Activated CD4-positive, alpha-beta memory T cell treated with anti-CD3 and anti-CD28 coated beads for 36 hours (primary cell): ENCODE measurements at regions of chr19 and their contacts with region 1.

Region 1: DNA sequence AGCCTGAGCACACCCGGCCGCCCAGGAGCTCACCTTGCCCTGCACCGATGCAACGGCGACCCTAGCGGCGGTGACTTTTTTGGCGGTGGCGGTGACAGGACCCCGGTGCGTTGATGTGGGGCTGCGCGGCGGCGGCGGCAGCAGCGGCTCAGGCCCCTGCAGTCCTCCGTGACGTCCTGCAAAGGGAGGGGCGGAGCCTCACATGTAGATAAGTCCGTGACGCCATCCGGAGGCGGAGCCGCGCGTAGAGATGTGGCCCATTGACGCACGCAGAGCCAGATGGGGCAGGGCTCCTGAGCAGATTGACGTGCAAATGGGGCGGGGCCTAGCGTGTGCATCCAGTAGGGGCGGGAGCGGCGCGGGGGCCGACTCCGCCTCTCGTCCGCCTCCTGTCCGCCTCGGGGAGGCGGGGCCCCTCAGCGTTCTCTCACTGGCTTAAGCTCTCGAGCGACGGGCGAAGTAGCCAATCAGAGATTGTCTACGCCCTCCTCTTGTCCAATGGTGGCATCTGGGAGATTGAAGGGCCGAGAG is at the start of gene RAB3A:
- DNase-seq: peak; percentile 100
- H3K4me3 Mint-ChIP-seq: peak within 1 kb of the TSS; percentile 93
- H3K27ac Mint-ChIP-seq: peak within 1 kb of the TSS; percentile 69
- H3K4me1 Mint-ChIP-seq: peaks cover 21% of the 10 kb centered on the region
- H3K27me3 Mint-ChIP-seq: peaks cover 3% of the 10 kb centered on the region
- total RNA-seq, gene RAB3A: 3.9 to 4.3 TPM

Region 2: DNA sequence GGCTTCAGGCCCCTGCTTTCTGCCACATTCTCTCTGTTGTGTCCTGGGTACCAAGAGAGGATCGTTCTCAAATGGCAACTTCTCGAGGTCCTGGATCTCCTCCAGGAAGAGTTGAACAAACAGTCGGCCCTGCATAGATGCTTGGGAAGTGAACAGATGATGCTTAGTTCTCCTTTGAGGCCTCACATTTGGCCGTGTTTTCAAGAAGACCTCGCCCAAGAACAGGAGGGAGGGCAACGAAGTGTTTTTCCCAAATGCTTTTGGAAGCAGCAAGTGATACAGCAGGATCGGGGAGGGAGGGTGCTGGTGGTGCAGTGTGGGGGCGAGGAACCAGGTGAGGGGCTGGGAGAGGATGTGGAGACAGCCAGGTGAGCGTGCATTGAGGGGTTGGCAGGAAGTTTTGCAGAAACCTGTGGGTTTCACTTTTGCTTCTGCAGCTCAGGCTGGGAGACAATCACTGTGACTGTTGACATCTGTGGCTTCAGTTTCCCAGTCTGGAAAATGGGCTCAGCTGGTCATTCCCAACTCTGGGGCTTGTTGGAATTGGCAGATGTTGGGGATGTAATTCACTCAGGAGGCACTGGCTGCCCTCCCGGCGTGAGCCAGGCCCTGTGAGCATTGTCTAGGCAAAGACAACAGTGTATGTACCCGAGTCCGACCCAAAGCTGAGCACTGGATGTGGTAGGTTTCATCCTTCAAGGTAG is 84.8 kb before region 1 on chr19:
- CTCF ChIA-PET with region 1: no interaction called
- POLR2A ChIA-PET with region 1: no interaction called
- intact Hi-C with region 1: no loop called
- DNase-seq: peak; percentile 67
- H3K4me3 Mint-ChIP-seq: peak overlapping the region; percentile 81
- H3K27ac Mint-ChIP-seq: peak overlapping the region; percentile 87
- H3K4me1 Mint-ChIP-seq: peaks cover 35% of the 10 kb centered on the region
- H3K27me3 Mint-ChIP-seq: no peaks in the 10 kb centered on the region

Region 3: DNA sequence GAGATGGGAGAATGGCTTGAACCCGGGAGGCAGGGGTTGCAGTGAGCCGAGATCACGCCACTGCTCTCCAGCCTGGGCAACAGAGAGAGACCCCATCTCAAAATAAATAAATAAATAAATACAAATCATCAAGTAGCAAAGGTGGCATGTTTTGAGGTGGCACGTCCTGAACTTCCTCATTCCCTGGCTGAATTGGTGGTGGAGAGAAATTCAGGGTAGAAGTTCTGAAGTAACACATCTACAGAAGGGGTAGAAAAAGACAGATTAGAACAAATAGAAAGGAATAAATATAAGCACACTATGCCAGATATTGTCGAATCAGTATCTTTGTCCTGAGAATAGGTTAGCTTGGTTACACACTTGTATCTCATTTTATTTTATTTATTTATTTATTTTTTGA is 24.0 kb before region 1 on chr19:
- CTCF ChIA-PET with region 1: no interaction called
- POLR2A ChIA-PET with region 1: no interaction called
- intact Hi-C with region 1: no loop called
- DNase-seq: no peak
- H3K4me3 Mint-ChIP-seq: no peak overlapping the region
- H3K27ac Mint-ChIP-seq: no peak overlapping the region
- H3K4me1 Mint-ChIP-seq: no peaks in the 10 kb centered on the region
- H3K27me3 Mint-ChIP-seq: no peaks in the 10 kb centered on the region

Region 4: GRCh38 chr19:18192673-18193387 is 11.1 kb before region 1 on chr19 and contains the start of gene MPV17L2:
- CTCF ChIA-PET with region 1: interaction called, 12 read pairs
- POLR2A ChIA-PET with region 1: interaction called, 4 read pairs
- intact Hi-C with region 1: loop called (anchors 1 kb)
- DNase-seq: peak; percentile 99
- H3K4me3 Mint-ChIP-seq: peak within 1 kb of the TSS; percentile 86
- H3K27ac Mint-ChIP-seq: peak within 1 kb of the TSS; percentile 87
- H3K4me1 Mint-ChIP-seq: peaks cover 21% of the 10 kb centered on the region
- H3K27me3 Mint-ChIP-seq: no peaks in the 10 kb centered on the region
- total RNA-seq, gene MPV17L2: 6.4 to 7.3 TPM

Region 5: DNA sequence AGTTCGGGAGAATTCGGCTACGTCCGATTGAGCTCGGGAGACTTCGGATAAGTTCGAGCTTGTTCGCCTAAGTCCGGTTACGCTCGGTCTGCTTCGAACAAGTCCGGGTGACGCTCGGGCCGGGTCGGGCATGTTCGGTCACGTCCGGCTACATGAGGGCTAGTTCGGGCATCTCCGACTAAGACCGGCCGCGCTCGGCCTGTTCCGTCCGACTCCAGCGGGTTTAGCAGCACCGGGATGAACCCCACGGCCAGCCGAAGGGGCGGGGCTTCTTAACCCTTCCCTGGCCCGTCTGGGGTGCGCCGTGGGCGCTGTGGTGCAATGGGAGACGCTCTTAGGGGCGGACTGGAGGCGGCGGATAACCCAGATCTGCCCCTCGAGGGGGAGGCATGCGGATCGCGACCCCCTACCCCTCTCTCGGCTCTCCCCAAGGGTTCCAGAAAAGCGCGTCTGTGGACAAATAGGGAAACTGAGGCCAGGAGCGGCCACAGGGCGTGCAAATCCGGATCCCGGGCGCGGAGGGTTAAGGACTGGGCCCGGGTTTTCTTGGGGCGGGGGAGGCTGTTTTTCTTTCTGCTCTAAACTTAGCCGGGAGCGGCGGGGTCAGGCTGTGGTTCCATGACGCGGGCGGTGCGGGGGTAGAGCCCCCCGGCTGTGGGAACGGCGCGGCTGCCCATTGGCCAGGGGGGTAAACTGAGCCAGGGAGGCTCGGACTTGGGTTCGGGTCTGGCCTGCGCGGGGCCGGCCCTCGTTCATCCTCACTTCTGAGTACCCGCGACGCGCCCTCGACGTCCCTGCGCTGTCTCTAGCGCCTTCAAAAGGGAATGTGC is 20.8 kb after region 1 on chr19:
- CTCF ChIA-PET with region 1: interaction called, 13 read pairs
- POLR2A ChIA-PET with region 1: no interaction called
- intact Hi-C with region 1: no loop called
- DNase-seq: peak; percentile 96
- H3K4me3 Mint-ChIP-seq: peak overlapping the region; percentile 71
- H3K27ac Mint-ChIP-seq: no peak overlapping the region
- H3K4me1 Mint-ChIP-seq: peaks cover 21% of the 10 kb centered on the region
- H3K27me3 Mint-ChIP-seq: peaks cover 57% of the 10 kb centered on the region

Region 6: DNA sequence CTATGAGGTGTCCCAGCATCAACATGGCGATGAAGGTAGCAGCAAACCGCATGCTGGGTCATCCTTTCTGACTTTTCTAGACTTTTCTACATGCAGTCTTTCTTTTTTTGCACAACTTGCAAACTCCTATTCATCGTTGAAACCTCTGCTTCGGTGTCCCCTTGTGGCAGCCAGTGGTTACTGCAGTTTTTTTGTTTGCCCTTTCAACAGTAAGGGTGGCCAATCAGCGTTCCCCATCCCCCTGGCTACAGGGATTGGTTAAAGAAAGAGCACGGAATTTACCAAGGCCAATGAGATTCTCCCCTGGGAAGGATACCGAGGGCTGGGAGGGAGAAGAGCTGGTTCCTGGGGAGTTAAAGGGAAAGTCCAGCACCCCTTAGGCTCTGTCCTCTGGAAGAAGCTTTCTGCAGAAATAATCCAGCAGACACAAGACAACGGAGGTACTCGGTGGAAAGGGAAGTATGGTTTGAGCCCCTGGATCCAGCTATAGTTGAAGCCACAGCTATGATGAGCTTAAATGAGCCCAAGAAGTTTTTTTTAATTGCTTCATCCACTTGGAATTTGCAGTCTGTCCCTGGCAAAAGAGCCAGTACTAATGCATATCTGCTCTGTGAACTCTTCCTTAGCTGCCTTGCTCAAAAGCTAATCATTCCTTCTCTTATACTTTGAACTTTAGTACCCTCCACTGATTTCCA is 124.6 kb after region 1 on chr19:
- CTCF ChIA-PET with region 1: interaction called, 15 read pairs
- POLR2A ChIA-PET with region 1: interaction called, 3 read pairs
- intact Hi-C with region 1: no loop called
- DNase-seq: peak; percentile 94
- H3K4me3 Mint-ChIP-seq: peak overlapping the region; percentile 68
- H3K27ac Mint-ChIP-seq: peak overlapping the region; percentile 56
- H3K4me1 Mint-ChIP-seq: peaks cover 17% of the 10 kb centered on the region
- H3K27me3 Mint-ChIP-seq: no peaks in the 10 kb centered on the region

Region 7: GRCh38 chr19:18388100-18388959 is 184.4 kb after region 1 on chr19:
- CTCF ChIA-PET with region 1: interaction called, 11 read pairs
- POLR2A ChIA-PET with region 1: no interaction called
- intact Hi-C with region 1: no loop called
- DNase-seq: peak; percentile 88
- H3K4me3 Mint-ChIP-seq: peak overlapping the region; percentile 64
- H3K27ac Mint-ChIP-seq: no peak overlapping the region
- H3K4me1 Mint-ChIP-seq: peaks cover 4% of the 10 kb centered on the region
- H3K27me3 Mint-ChIP-seq: peaks cover 31% of the 10 kb centered on the region

Region 8: GRCh38 chr19:18408053-18408476 is 204.1 kb after region 1 on chr19:
- CTCF ChIA-PET with region 1: interaction called, 10 read pairs
- POLR2A ChIA-PET with region 1: no interaction called
- intact Hi-C with region 1: no loop called
- DNase-seq: peak; percentile 46
- H3K4me3 Mint-ChIP-seq: no peak overlapping the region
- H3K27ac Mint-ChIP-seq: no peak overlapping the region
- H3K4me1 Mint-ChIP-seq: peaks cover 5% of the 10 kb centered on the region
- H3K27me3 Mint-ChIP-seq: peaks cover 8% of the 10 kb centered on the region

Region 9: DNA sequence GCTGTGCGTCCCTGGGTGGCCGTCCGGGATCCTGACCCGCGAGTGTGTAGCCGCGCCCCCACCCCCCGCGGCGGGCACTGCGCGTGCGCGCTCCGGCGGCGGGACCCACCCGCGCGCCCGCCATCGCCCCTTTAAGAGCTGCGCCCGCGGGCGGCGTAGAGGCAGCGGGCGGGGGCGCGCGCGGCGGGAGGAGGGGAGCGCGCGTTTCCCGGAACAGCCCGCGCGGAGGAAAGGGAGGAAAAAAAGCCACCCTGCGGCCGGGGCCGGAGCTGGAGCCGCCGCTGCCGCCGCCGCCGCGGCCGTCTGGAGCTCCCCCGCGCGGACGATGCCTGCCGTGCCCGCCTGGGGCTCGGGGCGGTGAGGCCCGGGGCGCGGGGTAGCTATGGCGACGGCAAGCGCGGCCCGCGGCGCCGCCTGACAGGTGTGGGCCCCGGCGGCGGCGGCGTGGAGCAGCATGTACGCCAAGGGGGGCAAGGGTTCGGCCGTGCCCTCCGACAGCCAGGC is 215.3 kb after region 1 on chr19 and contains the start of gene SSBP4:
- CTCF ChIA-PET with region 1: interaction called, 3 read pairs
- POLR2A ChIA-PET with region 1: no interaction called
- intact Hi-C with region 1: loop called (anchors 5 kb)
- DNase-seq: peak; percentile 79
- H3K4me3 Mint-ChIP-seq: peak within 1 kb of the TSS; percentile 96
- H3K27ac Mint-ChIP-seq: peak within 1 kb of the TSS; percentile 87
- H3K4me1 Mint-ChIP-seq: peaks cover 79% of the 10 kb centered on the region
- H3K27me3 Mint-ChIP-seq: peaks cover 17% of the 10 kb centered on the region
- total RNA-seq, gene SSBP4: 97.9 to 102 TPM